ENCODE measurements at regions of chr14 and their contacts with region 1.

Region 1: GRCh38 chr14:60248697-60249318 is at the start of gene PPM1A:
- DNase-seq: peak; percentile 90 to 98 (median 92)

Region 2: GRCh38 chr14:60091550-60092530 is 157.0 kb before region 1 on chr14 and contains the start of gene PCNX4:
- intact Hi-C with region 1: loop called (anchors 5 kb)
- DNase-seq: peak; percentile 92 to 99 (median 95)

Region 3: GRCh38 chr14:60331201-60332045 is 82.6 kb after region 1 on chr14:
- intact Hi-C with region 1: loop called (anchors 5 kb)
- DNase-seq: peak in 8 of 10 donors; percentile 19 to 90 (median 65)